ENCODE measurements at regions of chr17 and their contacts with region 1.

Region 1: GRCh38 chr17:44689477-44690217 is at the start of gene CCDC43:
- DNase-seq: peak; percentile 88 to 96 (median 90)
- ATAC-seq: peak; percentile 97
- H3K4me3 ChIP-seq: peak within 1 kb of the TSS; percentile 88
- H3K4me3 Mint-ChIP-seq: peak within 1 kb of the TSS; percentile 98
- H3K27ac ChIP-seq: peak within 1 kb of the TSS; percentile 88 to 89
- H3K27ac Mint-ChIP-seq: peak within 1 kb of the TSS; percentile 96
- H3K4me1 ChIP-seq: peaks cover 27% of the 10 kb centered on the region
- H3K4me1 Mint-ChIP-seq: peaks cover 30% of the 10 kb centered on the region
- H3K27me3 ChIP-seq: no peaks in the 10 kb centered on the region
- H3K27me3 Mint-ChIP-seq: no peaks in the 10 kb centered on the region
- CTCF ChIP-seq: no peak
- total RNA-seq, gene CCDC43: 23.6 to 25.3 TPM

Region 2: DNA sequence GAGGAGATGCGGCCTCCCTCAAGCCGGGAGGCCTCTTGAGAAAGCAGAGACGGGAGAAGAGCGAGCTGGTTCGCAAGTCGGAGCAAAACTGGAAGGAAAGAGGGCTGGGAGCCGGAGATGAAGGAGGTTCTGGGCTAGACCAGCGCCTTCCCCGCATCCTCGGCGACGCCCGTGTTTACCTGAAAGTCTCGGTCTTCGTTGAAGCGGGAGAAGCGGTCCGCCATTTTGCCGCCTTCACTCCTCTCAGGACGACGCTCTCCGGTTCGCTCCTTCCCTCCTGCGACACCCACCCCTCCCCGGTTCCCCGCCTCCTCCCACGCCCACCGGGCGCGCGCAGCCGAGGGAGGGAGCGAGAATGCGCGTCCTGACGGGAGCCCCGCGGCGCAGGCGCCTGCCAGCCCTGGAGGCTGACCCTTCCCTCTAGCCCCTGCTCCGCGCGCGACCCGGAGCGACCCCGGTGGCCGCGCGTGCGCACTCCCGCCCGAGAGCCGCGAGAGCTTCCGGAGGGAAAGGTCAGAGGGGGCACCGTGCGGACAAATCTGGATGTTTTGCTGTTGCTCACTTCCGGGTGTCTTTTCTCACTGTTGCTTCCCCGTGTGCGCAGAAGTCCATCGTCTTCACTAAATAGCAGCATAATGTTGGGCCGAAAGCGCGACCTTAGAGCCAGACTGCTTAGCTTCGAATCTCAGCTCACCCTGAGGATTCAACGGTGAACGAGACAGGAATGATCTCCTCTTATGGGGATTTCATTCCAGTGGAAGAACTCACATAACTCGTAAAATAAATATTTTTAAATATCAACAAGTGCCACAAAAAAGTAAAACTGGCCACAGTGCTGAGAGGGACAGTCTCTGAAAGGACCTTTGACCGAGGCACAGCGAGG is 186.3 kb before region 1 on chr17 and contains the start of gene GPATCH8:
- CTCF ChIA-PET with region 1: no interaction called
- POLR2A ChIA-PET with region 1: interaction called, 3 read pairs
- intact Hi-C with region 1: loop called in 1 of 2 experiments (anchors 2 kb)
- DNase-seq: peak; percentile 83 to 97 (median 92)
- ATAC-seq: peak; percentile 86
- H3K4me3 ChIP-seq: peak within 1 kb of the TSS; percentile 95
- H3K4me3 Mint-ChIP-seq: peak within 1 kb of the TSS; percentile 91
- H3K27ac ChIP-seq: peak within 1 kb of the TSS; percentile 80 to 91
- H3K27ac Mint-ChIP-seq: peak within 1 kb of the TSS; percentile 94
- H3K4me1 ChIP-seq: peaks cover 24% of the 10 kb centered on the region
- H3K4me1 Mint-ChIP-seq: peaks cover 54% of the 10 kb centered on the region
- H3K27me3 ChIP-seq: peaks cover 0 to 3% of the 10 kb centered on the region in 2 experiments
- H3K27me3 Mint-ChIP-seq: peaks cover 12% of the 10 kb centered on the region
- CTCF ChIP-seq: no peak
- total RNA-seq, gene GPATCH8: 76.0 to 76.9 TPM

Region 3: GRCh38 chr17:44708401-44709181 is 18.9 kb after region 1 on chr17 and contains the start of gene DBF4B:
- CTCF ChIA-PET with region 1: no interaction called
- POLR2A ChIA-PET with region 1: interaction called, 33 read pairs
- intact Hi-C with region 1: loop called (anchors 1 kb)
- DNase-seq: peak; percentile 69 to 93 (median 77)
- ATAC-seq: peak; percentile 97
- H3K4me3 ChIP-seq: peak within 1 kb of the TSS; percentile 71
- H3K4me3 Mint-ChIP-seq: no peak within 1 kb of the TSS
- H3K27ac ChIP-seq: no peak within 1 kb of the TSS
- H3K27ac Mint-ChIP-seq: no peak within 1 kb of the TSS
- H3K4me1 ChIP-seq: peaks cover 10% of the 10 kb centered on the region
- H3K4me1 Mint-ChIP-seq: no peaks in the 10 kb centered on the region
- H3K27me3 ChIP-seq: no peaks in the 10 kb centered on the region
- H3K27me3 Mint-ChIP-seq: peaks cover 14% of the 10 kb centered on the region
- CTCF ChIP-seq: no peak
- total RNA-seq, gene DBF4B: 1.5 TPM